Activated naive CD4-positive, alpha-beta T cell treated with anti-CD3 and anti-CD28 coated beads for 36 hours (primary cell): ENCODE measurements at regions of chr3 and their contacts with region 1.

Region 1: DNA sequence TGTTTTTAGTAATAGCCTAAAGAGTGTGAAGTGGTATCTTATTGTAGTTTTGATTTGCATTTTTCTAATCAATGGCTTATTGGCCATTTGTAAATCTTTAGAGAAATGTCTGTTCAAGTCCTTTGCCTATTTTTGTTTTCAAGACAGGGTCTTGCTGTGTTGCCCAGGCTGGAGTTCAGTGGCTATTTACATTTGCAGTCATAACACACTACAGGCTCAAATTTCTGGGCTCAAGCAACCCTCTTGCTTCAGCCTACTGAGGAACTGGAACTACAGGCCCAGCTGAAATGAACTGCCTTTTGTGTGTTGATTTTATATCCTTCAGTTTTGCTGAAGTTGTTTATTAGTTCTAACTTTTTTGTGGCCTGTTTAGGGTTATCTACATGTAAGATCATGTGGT is 27.9 kb downstream of the BSN start:
- DNase-seq: no peak
- H3K4me3 Mint-ChIP-seq: no peak overlapping the region
- H3K27ac Mint-ChIP-seq: no peak overlapping the region
- H3K4me1 Mint-ChIP-seq: no peaks in the 10 kb centered on the region
- H3K27me3 Mint-ChIP-seq: no peaks in the 10 kb centered on the region

Region 2: DNA sequence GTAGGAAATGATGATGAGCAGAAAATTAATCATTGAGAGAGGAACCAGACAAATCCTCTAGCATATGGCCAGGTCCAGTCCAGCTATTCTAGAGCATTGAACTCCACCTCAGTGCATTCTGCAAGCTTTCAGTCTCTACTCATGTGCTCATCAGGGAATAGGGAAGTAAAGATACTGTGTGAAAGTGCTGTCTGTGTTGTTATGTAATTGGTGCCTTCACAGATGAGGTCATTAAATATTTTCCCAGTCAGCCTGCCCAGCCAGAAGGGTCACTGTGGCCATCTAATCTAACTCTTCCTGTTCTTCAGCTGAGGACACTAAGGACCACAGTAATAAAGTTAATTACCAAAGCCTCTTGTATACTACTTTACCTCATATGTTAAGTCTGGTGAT is 333.3 kb before region 1 on chr3:
- CTCF ChIA-PET with region 1: no interaction called
- intact Hi-C with region 1: no loop called
- DNase-seq: no peak
- H3K4me3 Mint-ChIP-seq: no peak overlapping the region
- H3K27ac Mint-ChIP-seq: no peak overlapping the region
- H3K4me1 Mint-ChIP-seq: no peaks in the 10 kb centered on the region
- H3K27me3 Mint-ChIP-seq: no peaks in the 10 kb centered on the region

Region 3: DNA sequence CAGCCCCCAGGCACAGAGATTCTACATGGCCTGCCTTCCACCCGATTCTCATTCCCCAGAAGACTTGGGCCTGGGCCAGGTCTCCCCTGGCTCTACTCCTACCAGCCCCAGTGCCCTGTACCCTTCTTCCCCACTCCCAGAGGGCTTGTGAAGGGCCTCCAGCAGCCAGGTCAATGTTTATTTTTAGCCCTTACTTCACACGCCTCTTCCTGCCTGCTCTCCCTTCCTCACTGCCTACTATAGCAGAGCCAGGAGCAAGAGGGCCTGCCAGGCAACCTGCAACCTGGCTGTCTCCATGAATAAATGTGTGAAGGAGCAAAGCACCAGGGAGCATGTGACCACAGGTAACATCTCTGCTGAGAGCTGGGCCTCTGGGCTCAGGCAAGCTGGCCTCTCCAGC is 65.6 kb after region 1 on chr3:
- CTCF ChIA-PET with region 1: no interaction called
- intact Hi-C with region 1: loop called (anchors 2 kb)
- DNase-seq: no peak
- H3K4me3 Mint-ChIP-seq: no peak overlapping the region
- H3K27ac Mint-ChIP-seq: no peak overlapping the region
- H3K4me1 Mint-ChIP-seq: no peaks in the 10 kb centered on the region
- H3K27me3 Mint-ChIP-seq: no peaks in the 10 kb centered on the region

Region 4: GRCh38 chr3:49689046-49689907 is 107.1 kb after region 1 on chr3 and contains the starts of genes MST1 and RNF123:
- CTCF ChIA-PET with region 1: no interaction called
- intact Hi-C with region 1: no loop called
- DNase-seq: peak; percentile 93
- H3K4me3 Mint-ChIP-seq: peak within 1 kb of the TSS; percentile 97
- H3K27ac Mint-ChIP-seq: peak within 1 kb of the TSS; percentile 83
- H3K4me1 Mint-ChIP-seq: peaks cover 33% of the 10 kb centered on the region
- H3K27me3 Mint-ChIP-seq: peaks cover 4% of the 10 kb centered on the region
- total RNA-seq, gene MST1: 10.7 to 13.1 TPM
- total RNA-seq, gene RNF123: 20.3 to 21.5 TPM